Endothelial cell of umbilical vein (primary cell): ENCODE measurements at regions of chr20 and their contacts with region 1.

Region 1: DNA sequence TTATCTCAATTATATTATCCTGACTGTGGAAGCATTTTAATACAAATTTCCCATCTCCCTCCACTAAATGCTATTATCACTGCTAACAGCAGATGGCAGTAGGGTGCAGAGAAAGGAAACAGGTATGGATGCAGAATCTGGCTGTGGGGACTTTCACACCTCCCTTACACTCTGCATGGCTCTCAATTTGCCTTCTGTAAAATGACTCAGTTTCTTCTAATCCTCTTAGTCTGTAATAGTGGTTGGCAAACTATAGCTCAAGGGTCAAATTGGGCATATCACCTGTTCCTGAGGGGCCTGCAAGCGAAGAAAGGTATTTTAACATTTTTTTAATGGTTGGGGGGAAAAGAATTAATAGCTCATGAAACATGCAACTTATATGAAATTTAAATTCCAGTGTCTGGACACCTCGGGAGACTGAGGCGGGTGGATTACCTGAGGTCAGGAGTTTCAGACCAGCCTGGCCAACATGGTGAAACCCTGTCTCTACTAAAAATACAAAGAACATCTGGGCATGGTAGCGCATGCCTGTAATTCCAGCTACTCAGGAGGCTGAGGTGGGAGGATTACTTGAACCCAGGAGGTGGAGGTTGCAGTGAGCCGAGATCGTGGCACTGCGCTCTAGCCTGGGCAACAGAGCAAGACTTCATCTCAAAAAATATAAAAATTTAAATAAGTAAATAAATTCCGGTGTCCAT is 83.5 kb downstream of the ZMYND8 start:
- DNase-seq: peak; percentile 80
- H3K4me3 ChIP-seq: no peak overlapping the region
- H3K27ac ChIP-seq: peak overlapping the region; percentile 87
- H3K4me1 ChIP-seq: peaks cover 39% of the 10 kb centered on the region
- H3K27me3 ChIP-seq: no peaks in the 10 kb centered on the region
- CTCF ChIP-seq: peak; percentile 60 to 67
- POLR2A ChIP-seq: no peak

Region 2: DNA sequence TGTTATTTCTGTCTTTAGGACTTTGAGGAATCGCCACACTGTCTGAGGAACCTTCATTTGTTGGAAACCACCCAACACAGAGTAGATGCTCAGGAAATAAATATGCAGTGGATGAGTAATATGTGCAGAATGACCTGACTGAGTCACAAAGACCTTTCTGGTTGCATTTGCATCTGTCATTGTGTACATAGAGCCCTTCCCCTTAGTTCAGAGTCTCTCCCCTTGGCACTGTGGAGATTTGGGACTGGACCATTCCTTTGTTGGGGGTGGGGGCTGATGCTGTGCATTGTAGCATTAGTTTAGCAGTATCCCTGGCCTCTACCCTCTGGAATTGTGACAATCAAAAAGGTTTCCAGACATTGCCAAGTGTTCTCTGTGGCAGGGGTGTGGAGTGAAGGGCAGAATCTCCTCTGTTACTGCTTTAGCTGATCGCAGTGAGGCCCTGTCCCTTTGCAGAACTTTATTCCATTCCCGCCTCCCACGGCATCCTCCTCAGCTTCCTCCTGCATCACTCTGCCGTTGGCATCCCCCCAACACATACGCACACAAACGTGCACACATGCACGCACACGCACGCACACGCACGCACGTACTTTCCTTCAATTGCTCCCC is 313.9 kb before region 1 on chr20:
- CTCF ChIA-PET with region 1: no interaction called
- POLR2A ChIA-PET with region 1: no interaction called
- dilution Hi-C with region 1: no loop called
- intact Hi-C with region 1: no loop called
- DNase-seq: no peak
- H3K4me3 ChIP-seq: no peak overlapping the region
- H3K27ac ChIP-seq: no peak overlapping the region
- H3K4me1 ChIP-seq: no peaks in the 10 kb centered on the region
- H3K27me3 ChIP-seq: no peaks in the 10 kb centered on the region
- CTCF ChIP-seq: no peak
- POLR2A ChIP-seq: no peak

Region 3: DNA sequence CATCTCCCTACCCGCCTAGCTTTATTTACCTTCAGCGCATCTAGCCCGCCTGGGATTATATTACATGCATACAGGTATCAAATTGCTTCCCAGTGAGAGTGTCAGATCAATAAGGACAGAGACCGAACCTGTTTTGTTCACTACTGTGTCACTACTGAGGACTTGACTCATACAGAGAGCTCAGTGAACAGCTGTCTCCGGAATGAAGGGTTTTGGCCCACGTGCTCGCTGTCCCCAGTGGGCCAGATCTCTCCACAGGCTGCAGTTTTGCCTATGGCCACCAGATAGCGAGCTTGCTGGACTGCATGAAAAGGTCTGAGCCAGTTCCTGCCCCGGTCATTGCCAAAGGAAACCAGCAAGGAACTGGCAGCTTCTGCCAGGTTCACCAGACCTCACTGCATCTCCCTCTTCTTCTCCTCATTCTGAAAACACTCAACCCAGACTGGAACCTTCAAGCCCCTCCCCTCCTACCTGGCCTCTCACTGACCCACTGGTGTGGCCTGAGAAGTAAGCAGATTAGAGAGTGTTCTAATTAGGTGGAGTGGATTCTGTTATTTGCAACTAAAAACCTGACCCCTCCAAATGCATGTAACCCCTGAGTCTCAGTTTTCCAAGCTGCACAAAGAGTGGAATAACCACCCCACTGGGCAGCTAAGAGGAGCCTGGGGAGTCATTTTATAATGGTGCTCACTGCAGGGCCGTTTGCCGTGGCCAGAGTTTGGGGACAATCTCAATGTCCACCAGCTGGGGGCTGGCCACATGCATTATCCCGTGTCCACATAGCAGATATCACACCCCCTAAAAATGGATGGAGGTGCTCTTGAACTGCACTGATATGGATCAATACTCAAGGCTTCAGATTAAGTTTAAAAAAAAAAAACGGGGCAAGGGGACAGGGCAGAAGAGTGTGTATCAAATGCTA is 67.2 kb before region 1 on chr20:
- CTCF ChIA-PET with region 1: interaction called, 12 read pairs
- POLR2A ChIA-PET with region 1: no interaction called
- dilution Hi-C with region 1: no loop called
- intact Hi-C with region 1: no loop called
- DNase-seq: peak; percentile 64
- H3K4me3 ChIP-seq: no peak overlapping the region
- H3K27ac ChIP-seq: no peak overlapping the region
- H3K4me1 ChIP-seq: peaks cover 7% of the 10 kb centered on the region
- H3K27me3 ChIP-seq: no peaks in the 10 kb centered on the region
- CTCF ChIP-seq: peak; percentile 73 to 81
- POLR2A ChIP-seq: no peak

Region 4: GRCh38 chr20:47290008-47290407 is 17.0 kb after region 1 on chr20:
- CTCF ChIA-PET with region 1: interaction called, 23 read pairs
- POLR2A ChIA-PET with region 1: no interaction called
- dilution Hi-C with region 1: no loop called
- intact Hi-C with region 1: no loop called
- DNase-seq: no peak
- H3K4me3 ChIP-seq: no peak overlapping the region
- H3K27ac ChIP-seq: no peak overlapping the region
- H3K4me1 ChIP-seq: peaks cover 2% of the 10 kb centered on the region
- H3K27me3 ChIP-seq: no peaks in the 10 kb centered on the region
- CTCF ChIP-seq: no peak
- POLR2A ChIP-seq: no peak

Region 5: DNA sequence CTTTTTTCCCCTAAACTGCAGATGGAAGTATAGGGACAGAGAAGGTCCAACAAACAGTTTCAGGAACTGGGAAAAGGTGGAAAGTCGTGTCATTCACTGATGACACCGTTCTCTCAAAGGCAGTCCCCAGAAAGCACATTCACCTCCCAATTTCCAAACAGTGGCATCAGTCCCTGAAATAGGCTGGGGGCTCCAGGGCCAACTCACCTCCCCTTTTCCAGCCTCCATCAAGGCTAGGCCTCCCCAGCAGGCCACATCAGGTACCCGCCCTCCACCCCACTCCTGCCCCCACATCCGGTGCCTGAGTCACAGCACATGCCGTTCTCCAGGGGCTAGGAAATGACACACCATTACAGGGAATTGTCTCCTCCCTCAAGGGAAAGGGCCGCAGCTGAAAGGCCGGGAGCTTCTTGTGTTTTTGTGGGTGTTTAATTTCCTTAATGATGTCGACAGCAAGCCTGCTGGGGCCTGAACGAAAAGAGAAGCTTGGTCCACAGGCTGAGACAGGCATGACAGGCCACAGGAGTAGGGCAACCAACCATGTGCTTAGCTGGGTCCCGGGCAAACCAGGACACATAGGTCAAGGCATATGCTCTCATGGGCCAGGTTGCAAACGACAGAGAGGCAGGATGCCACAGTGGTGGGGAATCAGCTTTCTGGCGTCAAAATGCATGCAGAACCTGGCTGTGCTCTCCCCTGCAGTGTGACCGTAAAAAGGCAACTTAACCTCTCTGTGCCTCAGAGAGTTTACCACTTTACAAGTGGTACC is 44.3 kb after region 1 on chr20:
- CTCF ChIA-PET with region 1: interaction called, 21 read pairs
- POLR2A ChIA-PET with region 1: interaction called, 4 read pairs
- dilution Hi-C with region 1: no loop called
- intact Hi-C with region 1: loop called (anchors 1 kb)
- DNase-seq: peak; percentile 97
- H3K4me3 ChIP-seq: peak overlapping the region in 1 of 3 experiments; percentile 15
- H3K27ac ChIP-seq: peak overlapping the region; percentile 86
- H3K4me1 ChIP-seq: peaks cover 67% of the 10 kb centered on the region
- H3K27me3 ChIP-seq: no peaks in the 10 kb centered on the region
- CTCF ChIP-seq: no peak
- POLR2A ChIP-seq: peak; percentile 90

Region 6: DNA sequence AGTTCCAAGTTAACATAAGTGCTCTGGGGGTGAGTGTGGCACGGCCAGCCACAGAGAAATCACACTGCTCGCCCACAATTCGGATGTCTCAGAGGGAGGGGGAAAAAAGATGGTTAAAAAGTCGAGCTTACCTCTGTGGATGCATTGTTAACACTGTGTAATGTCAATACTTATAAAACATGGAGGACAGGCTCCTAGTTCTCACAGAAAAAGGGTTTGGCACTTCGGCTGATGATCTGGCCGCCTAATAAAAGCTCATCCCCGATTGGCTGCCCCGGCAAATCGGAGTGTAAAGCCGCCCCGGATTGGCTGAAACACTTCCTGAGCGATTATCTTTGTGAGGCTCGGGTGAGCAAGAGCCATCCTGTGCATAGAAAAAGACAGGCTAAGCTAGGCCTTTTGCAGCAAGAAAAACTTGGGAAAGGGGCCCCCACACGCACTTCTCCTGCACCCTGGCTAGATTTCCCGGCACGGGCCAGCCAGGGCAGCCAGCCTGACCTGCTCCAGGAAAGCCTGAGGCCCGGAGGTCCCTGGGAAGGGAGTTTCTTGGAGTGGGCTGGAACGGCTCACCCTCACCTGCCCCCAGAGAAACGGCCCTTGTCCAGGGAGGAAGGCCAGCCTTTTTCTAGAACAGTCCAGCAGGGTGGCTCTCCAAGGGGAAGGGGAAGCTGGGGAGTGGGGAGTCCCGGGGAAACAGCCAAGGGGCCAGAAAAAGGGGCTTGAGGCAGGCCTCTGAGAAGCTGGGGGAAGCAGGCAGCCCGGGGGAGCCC is 83.7 kb after region 1 on chr20 and contains the start of gene ZMYND8:
- CTCF ChIA-PET with region 1: interaction called, 153 read pairs
- POLR2A ChIA-PET with region 1: interaction called, 10 read pairs
- dilution Hi-C with region 1: no loop called
- intact Hi-C with region 1: loop called (anchors 1 kb)
- DNase-seq: peak; percentile 98
- H3K4me3 ChIP-seq: peak within 1 kb of the TSS; percentile 16 to 82 (median 35)
- H3K27ac ChIP-seq: peak within 1 kb of the TSS; percentile 97
- H3K4me1 ChIP-seq: peaks cover 94% of the 10 kb centered on the region
- H3K27me3 ChIP-seq: no peaks in the 10 kb centered on the region
- CTCF ChIP-seq: no peak
- POLR2A ChIP-seq: peak; percentile 9
- total RNA-seq, gene ZMYND8: 75.2 and 76.3 TPM in 2 replicates